ENCODE measurements at regions of chr4 and their contacts with region 1.

Region 1: DNA sequence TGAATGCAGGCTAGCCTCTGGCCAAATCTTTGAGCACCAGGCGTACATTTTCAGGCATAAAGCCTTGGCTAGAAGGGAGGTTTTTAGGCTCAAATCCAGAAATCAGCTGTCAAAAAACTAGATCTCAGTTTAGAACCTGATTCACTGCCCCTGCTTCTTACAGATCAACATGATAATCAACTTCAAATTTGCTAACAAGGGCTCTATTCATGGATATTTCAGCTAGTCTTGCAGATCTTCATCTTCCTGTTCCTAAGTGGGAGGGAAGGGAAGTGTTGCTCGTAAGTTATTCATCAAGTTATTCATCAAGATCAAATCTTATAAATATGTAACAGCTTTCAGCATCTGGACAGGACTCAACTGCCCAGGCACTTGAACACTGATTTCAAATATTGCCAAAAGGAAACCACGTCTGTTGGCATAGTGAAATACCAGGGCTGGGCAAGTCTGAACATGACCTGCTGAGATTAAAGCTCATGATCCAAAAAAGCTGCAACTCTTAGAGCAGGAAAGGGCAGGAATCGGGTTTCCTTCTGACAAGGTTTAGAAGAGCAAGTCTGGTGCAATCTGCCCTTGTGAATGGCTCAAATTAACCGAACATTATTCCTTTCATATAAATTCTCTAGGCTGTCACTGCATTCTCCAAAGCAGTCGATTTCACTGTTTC is 200.3 kb downstream of the PDGFC start:
- DNase-seq: peak; percentile 99
- H3K4me3 ChIP-seq: peak overlapping the region; percentile 13 to 36 (median 18)
- H3K27ac ChIP-seq: peak overlapping the region; percentile 93
- H3K4me1 ChIP-seq: peaks cover 45% of the 10 kb centered on the region
- H3K27me3 ChIP-seq: no peaks in the 10 kb centered on the region
- CTCF ChIP-seq: no peak

Region 2: DNA sequence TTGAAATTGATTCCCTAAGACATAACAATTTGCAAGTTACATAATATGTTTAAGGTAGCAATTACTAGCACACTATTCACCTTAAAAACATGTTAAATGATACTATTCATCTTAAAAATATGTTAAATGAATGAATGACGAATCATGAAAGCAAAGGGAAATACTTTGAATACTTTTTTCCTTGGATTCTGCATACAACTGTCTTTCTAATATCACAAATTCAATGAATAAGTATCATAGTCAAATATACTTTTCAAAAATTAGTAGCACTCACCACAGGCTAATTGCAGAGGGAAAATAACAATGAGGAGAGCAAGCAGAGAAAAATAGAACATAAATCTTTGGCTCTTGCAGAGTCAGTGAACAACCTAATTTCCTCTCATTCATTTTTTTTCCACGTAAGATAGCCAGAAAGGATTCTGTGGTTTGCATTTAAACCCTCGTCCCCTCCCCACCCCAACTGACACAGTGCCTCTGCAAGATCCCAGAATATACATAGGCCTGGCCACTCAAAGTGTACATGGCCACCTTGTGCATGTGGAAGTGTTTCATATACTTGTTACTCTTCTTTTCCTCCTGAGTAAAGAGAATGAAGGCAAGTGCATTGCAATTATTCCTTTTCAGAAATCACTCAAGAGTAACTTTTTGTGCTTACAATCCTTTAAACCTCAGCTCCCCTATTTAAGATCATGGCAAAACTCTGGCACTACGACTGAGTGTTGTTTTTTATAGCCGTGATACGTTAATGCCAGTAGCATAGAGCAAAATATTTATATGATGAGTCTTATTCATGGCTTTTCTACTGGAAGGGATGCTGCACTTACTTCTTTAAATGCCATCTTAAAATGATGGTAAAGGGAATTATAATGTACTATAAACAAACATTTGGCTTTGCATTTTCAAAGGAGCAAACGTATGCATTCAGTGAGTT is 36.1 kb before region 1 on chr4:
- CTCF ChIA-PET with region 1: no interaction called
- dilution Hi-C with region 1: no loop called
- in situ Hi-C with region 1: no loop called
- intact Hi-C with region 1: loop called (anchors 2 kb)
- DNase-seq: peak; percentile 24
- H3K4me3 ChIP-seq: no peak overlapping the region
- H3K27ac ChIP-seq: no peak overlapping the region
- H3K4me1 ChIP-seq: peaks cover 6% of the 10 kb centered on the region
- H3K27me3 ChIP-seq: no peaks in the 10 kb centered on the region
- CTCF ChIP-seq: no peak

Region 3: DNA sequence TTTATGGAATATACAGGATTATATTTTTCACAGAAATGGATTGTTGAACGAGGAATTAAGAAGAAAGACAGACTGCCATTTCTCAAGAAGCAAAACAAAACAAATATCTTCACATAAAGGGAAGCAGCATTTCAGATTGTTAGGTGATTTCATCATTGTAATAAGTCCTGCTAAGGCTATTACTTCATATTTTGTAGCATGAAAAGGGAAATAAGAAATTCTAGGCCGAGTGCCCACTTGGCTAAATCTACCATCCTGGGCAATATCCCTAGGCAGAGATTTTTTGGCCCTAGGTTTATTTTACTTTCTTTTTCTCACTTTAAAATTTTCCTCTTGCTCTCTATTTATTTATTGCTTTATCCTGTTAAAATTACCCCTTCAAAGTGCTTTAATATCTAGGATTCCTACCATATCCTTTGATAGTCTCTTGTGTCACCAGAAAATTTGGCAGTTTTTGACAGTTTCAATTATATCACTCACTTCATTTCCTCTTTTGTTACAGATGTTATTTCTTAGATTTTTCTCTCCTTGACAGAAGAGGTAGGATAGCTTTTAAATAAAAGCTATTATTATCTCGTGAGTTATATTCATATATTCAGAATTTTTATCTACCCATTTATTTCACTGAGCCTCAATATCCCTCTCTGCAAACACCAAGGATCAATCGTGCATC is 58.0 kb after region 1 on chr4:
- CTCF ChIA-PET with region 1: no interaction called
- dilution Hi-C with region 1: no loop called
- in situ Hi-C with region 1: no loop called
- intact Hi-C with region 1: loop called (anchors 2 kb)
- DNase-seq: peak; percentile 12
- H3K4me3 ChIP-seq: peak overlapping the region in 1 of 3 experiments; percentile 20
- H3K27ac ChIP-seq: peak overlapping the region; percentile 68
- H3K4me1 ChIP-seq: peaks cover 29% of the 10 kb centered on the region
- H3K27me3 ChIP-seq: no peaks in the 10 kb centered on the region
- CTCF ChIP-seq: no peak

Region 4: DNA sequence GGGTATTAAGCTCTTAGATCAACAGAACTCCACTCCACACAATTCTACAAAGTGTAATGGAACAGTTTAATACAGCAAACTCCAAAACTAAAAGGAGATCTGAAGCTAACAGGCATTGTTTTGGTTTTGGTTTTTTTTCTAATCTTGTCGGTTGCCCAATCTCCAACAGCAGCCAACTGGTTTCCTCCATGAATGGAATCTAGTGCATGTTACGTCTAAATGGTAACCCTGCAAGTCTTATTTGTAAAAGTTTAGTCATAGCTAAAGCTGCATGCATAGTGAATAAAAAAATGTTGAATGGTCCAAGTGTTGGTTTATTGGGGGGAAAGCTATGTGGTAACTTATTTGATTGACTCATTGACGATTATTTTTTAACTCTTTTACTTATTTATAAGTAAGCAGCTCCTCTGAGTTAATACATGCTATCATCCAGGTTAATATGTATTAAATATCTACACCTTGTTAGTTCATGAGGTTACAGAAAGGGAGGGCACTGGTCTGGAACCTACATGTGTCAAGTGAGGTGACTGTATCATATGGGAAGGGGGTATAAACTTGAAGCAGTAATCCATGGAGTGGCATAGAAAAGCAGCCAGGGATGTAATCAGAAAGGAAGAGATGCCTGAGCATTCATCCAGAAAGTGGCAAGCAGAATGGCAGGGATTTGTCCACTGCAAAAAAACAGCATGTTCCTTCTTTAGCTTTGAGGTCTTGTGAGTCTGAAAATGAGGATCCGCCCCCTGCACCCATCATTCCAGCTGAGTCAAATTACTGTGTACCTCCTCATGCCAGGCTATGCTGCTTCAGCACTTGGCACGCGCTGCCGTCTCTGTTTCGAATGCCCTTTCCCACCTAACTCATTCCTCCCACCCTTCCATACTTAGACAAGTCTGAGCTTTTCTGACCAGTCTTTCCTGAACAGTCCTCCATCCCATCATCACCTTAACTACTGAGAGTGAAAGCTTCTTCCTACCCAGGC is 118.6 kb after region 1 on chr4:
- CTCF ChIA-PET with region 1: no interaction called
- dilution Hi-C with region 1: no loop called
- in situ Hi-C with region 1: no loop called
- intact Hi-C with region 1: loop called (anchors 5 kb)
- DNase-seq: peak; percentile 72
- H3K4me3 ChIP-seq: peak overlapping the region in 1 of 3 experiments; percentile 22
- H3K27ac ChIP-seq: peak overlapping the region; percentile 56
- H3K4me1 ChIP-seq: peaks cover 20% of the 10 kb centered on the region
- H3K27me3 ChIP-seq: no peaks in the 10 kb centered on the region
- CTCF ChIP-seq: no peak

Region 5: DNA sequence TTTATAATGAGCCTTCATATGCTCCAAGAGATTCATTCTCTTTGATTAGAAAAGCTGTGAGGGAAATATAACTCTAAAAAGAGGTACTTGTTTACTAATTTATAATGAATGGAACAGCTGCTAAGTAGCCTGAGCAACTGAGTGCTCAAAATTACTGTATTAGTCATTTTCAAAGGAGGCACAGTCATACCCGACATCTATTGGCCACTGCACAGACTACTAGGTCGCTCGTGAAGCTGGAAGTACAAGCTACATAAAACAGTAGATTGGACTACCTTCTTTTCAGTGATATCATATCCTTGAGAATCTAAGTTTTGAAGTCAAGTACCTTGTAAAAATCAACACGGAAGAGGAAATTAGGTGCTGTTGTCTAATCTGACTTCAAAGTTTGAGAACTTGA is 252.6 kb after region 1 on chr4:
- CTCF ChIA-PET with region 1: no interaction called
- dilution Hi-C with region 1: no loop called
- in situ Hi-C with region 1: no loop called
- intact Hi-C with region 1: no loop called
- DNase-seq: no peak
- H3K4me3 ChIP-seq: no peak overlapping the region
- H3K27ac ChIP-seq: no peak overlapping the region
- H3K4me1 ChIP-seq: no peaks in the 10 kb centered on the region
- H3K27me3 ChIP-seq: no peaks in the 10 kb centered on the region
- CTCF ChIP-seq: no peak

Region 6: GRCh38 chr4:157045507-157046127 is 274.3 kb after region 1 on chr4:
- CTCF ChIA-PET with region 1: no interaction called
- dilution Hi-C with region 1: no loop called
- in situ Hi-C with region 1: no loop called
- intact Hi-C with region 1: loop called (anchors 5 kb)
- DNase-seq: peak; percentile 66
- H3K4me3 ChIP-seq: no peak overlapping the region
- H3K27ac ChIP-seq: no peak overlapping the region
- H3K4me1 ChIP-seq: peaks cover 3% of the 10 kb centered on the region
- H3K27me3 ChIP-seq: no peaks in the 10 kb centered on the region
- CTCF ChIP-seq: peak; percentile 93